Panc1 (cell line): ENCODE measurements at regions of chr17 and their contacts with region 1.

Region 1: GRCh38 chr17:75601057-75602051 is 13.8 kb downstream of the MYO15B start:
- DNase-seq: peak; percentile 33
- ATAC-seq: peak; percentile 80
- H3K4me3 ChIP-seq: no peak overlapping the region
- H3K27ac ChIP-seq: no peak overlapping the region
- H3K4me1 ChIP-seq: no peaks in the 10 kb centered on the region
- H3K27me3 ChIP-seq: no peaks in the 10 kb centered on the region
- CTCF ChIP-seq: peak; percentile 95

Region 2: DNA sequence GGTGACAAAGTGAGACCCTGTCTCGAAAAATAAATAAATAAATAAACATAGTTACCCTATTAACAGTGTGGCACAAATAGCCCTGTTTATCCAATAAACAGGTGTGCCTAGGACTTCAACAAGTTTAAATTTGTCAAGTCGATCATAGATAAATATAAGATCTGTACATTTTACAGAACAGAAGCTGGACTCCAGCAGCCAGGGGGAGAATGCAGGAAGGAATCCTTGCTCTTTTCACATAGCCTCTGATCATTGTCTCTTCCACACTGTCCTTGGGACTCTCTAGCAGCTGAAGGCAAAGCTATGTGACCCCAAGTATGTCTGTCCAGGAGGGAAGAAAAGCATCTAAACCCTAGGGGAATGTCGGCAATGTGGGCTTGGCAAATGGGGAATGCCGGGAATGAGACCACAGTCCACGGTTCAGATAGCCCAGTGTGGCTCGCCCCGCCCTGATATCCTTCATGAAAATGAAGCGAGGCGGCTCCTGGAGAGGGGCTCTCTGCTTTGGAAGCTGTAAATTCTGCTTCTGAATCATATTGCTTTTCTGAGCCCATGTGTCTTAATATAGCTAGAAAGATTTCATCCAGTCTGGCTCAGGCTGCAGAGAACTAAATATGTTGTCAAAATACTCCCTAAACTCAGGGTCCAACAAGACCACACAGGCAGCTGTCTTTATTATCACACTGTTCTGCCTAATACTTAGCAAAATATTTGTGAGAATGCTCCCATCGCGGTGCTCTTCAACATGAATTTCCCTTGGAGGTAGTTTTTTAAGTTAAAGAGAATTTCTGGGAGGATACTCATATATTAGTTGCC is 171.0 kb before region 1 on chr17:
- CTCF ChIA-PET with region 1: interaction called, 12 read pairs
- POLR2A ChIA-PET with region 1: no interaction called
- in situ Hi-C with region 1: no loop called
- intact Hi-C with region 1: no loop called
- DNase-seq: no peak
- ATAC-seq: peak; percentile 42
- H3K4me3 ChIP-seq: peak overlapping the region in 1 of 2 experiments; percentile 16; a peak in 1 of 4 replicates
- H3K27ac ChIP-seq: peak overlapping the region; percentile 48
- H3K4me1 ChIP-seq: peaks cover 21% of the 10 kb centered on the region
- H3K27me3 ChIP-seq: no peaks in the 10 kb centered on the region
- CTCF ChIP-seq: no peak

Region 3: DNA sequence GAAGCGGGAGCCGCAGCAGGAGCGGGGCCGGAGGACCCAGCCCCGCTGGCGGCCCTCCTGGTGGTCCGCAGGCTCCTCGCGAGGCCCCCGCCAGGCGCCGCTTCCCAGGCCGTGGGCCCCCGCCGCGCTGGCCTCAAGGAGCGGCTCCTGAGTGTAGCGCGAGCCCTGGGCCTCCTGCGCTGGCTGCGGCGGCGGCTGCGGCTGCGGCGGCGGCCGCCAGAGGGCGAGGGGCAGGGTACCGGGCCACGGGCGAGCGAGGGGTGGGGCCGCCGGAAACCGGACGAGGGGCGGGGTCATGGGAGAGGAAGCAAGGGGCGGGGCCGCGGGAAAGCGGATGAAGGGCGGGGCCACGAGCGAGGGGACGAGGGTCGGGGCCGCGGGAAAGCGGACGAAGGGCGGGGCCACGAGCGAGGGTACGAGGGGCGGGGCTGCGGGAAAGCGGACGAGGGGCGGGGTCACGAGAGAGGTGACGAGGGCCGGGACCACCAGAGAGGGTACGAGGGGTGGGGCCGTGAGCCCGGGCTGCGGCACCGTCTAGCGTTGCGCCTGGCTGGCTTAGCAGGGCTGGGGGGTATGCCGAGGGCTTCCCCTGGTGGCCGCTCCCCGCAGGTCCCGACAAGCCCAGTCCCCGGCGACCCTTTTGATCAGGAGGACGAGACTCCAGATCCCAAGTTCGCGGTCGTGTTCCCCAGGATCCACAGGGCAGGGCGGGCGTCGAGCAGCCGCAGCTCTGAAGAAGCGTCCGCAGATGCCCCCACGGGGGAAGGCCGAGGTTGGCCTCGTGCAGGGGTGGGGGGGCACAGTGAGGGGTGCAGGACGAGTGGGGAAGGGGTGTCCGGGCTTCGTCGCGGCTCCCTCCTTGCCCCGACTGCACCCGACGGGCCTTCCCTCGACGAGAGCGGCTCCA is 12.1 kb before region 1 on chr17:
- CTCF ChIA-PET with region 1: interaction called, 12 read pairs
- POLR2A ChIA-PET with region 1: no interaction called
- in situ Hi-C with region 1: no loop called
- intact Hi-C with region 1: no loop called
- DNase-seq: no peak
- ATAC-seq: peak; percentile 92
- H3K4me3 ChIP-seq: peak overlapping the region; percentile 59 to 62
- H3K27ac ChIP-seq: peak overlapping the region; percentile 83
- H3K4me1 ChIP-seq: peaks cover 5% of the 10 kb centered on the region; the same call in 1 of the 2 replicates
- H3K27me3 ChIP-seq: no peaks in the 10 kb centered on the region
- CTCF ChIP-seq: peak; percentile 96

Region 4: DNA sequence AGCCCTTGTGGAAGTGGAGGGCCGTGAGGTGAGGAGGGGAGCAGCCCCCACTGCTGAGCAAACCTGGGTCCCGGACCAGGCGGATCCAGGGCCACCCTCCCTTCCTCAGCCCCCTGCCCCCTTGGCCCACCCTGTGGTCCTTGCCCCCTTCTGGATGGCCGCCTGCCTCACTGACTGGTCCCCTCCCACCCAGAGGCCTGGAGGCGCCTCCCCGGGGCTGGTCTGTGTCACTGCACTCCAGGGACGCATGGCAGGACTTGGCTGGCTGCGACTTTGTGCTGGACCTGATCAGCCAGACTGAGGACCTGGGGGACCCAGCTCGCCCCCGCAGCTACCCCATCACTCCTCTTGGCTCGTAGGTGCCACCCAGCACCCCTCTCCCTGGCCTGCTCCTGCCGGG is 12.7 kb after region 1 on chr17:
- CTCF ChIA-PET with region 1: interaction called, 12 read pairs
- POLR2A ChIA-PET with region 1: interaction called, 7 read pairs
- in situ Hi-C with region 1: no loop called
- intact Hi-C with region 1: no loop called
- DNase-seq: no peak
- ATAC-seq: peak; percentile 44; the same call in 1 of the 2 replicates
- H3K4me3 ChIP-seq: no peak overlapping the region
- H3K27ac ChIP-seq: no peak overlapping the region
- H3K4me1 ChIP-seq: no peaks in the 10 kb centered on the region
- H3K27me3 ChIP-seq: no peaks in the 10 kb centered on the region
- CTCF ChIP-seq: no peak; the same call in 1 of the 2 replicates

Region 5: DNA sequence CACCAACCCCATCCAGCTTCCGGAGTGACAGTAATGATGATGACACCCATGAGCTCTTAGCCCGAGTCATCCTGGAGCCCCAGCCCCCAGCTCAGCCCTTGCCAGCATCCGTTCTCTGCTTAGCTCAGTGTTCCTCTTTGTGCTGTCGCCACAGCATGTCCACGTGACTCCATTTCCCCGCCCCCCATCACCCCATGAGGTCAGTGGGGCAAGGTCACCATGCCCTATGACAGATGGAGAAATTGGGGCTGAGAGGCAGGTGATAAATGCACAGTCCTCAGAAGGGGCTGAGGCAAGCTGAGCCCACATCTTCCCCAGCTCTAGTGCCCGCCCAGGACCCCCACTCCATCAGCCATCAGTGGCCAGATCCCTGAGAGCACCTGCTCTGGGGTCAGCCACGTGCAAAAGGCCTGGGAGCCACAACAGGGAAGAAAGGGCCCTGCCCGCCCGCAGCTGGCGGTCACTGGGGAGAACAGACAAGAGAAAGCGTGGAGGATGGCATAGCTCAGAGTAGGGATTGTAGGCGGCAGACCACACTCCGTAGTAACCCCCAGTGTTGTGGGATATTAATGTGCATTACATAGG is 137.0 kb after region 1 on chr17:
- CTCF ChIA-PET with region 1: interaction called, 12 read pairs
- POLR2A ChIA-PET with region 1: no interaction called
- in situ Hi-C with region 1: no loop called
- intact Hi-C with region 1: no loop called
- DNase-seq: no peak
- ATAC-seq: no peak
- H3K4me3 ChIP-seq: no peak overlapping the region
- H3K27ac ChIP-seq: no peak overlapping the region
- H3K4me1 ChIP-seq: no peaks in the 10 kb centered on the region
- H3K27me3 ChIP-seq: no peaks in the 10 kb centered on the region
- CTCF ChIP-seq: no peak